Transverse colon (tissue), 4 donors: ENCODE measurements at regions of chr21 and their contacts with region 1.

Region 1: DNA sequence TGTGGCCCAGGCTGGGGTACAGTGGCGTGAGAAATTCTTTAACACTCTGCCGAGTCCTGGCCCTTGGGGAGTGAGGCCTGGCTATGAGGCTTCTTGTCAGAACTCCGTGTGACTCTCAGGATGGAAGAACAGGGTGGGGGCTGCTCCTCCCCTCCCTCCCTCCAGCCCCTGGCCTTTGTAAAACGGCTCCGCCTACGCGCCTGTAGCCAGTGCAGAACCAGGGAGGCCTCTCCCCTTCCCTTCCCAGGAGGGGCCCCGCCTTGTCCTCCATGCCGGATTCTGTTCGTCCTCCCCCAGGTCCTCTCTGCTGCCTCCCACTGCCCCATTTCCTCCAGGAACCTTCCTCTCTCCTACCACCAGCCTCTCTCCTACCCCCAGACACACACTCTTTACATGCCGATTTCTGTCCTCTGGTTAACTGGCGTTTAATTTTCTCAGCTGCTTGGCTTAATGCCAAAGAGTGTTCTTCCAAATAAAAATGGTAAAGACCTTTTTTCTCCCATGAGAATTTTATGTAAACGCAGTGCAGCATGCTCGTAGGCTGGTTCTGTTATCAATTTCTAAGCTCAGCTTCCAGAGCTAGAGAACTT is 21.0 kb downstream of the PDE9A start:
- DNase-seq: peak; percentile 44
- H3K4me3 ChIP-seq: peak overlapping the region in 1 of 4 donors; percentile 5
- H3K27ac ChIP-seq: peak overlapping the region; percentile 32 to 76 (median 50)
- H3K4me1 ChIP-seq: peaks cover 0 to 24% (median 9%) of the 10 kb centered on the region in 4 donors
- H3K27me3 ChIP-seq: no peaks in the 10 kb centered on the region
- CTCF ChIP-seq: no peak
- EP300 ChIP-seq: no peak
- POLR2A ChIP-seq: no peak

Region 2: GRCh38 chr21:42725416-42725930 is 51.0 kb after region 1 on chr21:
- in situ Hi-C with region 1: no loop called
- intact Hi-C with region 1: loop called (anchors 5 kb)
- DNase-seq: no peak
- H3K4me3 ChIP-seq: no peak overlapping the region
- H3K27ac ChIP-seq: peak overlapping the region; percentile 85 to 87 (median 86)
- H3K4me1 ChIP-seq: peaks cover 28 to 57% (median 44%) of the 10 kb centered on the region in 4 donors
- H3K27me3 ChIP-seq: no peaks in the 10 kb centered on the region
- CTCF ChIP-seq: no peak
- EP300 ChIP-seq: no peak
- POLR2A ChIP-seq: no peak